H1 (cell line): ENCODE measurements at regions of chr20 and their contacts with region 1.

Region 1: GRCh38 chr20:13819885-13820645 is 35.2 kb downstream of the NDUFAF5 start:
- DNase-seq: no peak
- H3K4me3 ChIP-seq: no peak overlapping the region
- H3K27ac ChIP-seq: no peak overlapping the region
- H3K4me1 ChIP-seq: 0 out of 7 replicates have a peak, but pooled peaks cover 0 to 2% (median 0%) of the 10 kb centered on the region in 4 experiments
- H3K27me3 ChIP-seq: no peaks in the 10 kb centered on the region
- CTCF ChIP-seq: peak in 2 of 3 experiments; percentile 52 to 53; a peak in 2 of 4 replicates
- EP300 ChIP-seq: no peak
- POLR2A ChIP-seq: no peak
- RAD21 ChIP-seq: peak; percentile 61

Region 2: GRCh38 chr20:13809373-13809772 is 10.7 kb before region 1 on chr20:
- CTCF ChIA-PET with region 1: interaction called, 12 read pairs
- POLR2A ChIA-PET with region 1: no interaction called
- DNase-seq: no peak
- H3K4me3 ChIP-seq: no peak overlapping the region
- H3K27ac ChIP-seq: no peak overlapping the region
- H3K4me1 ChIP-seq: no peaks in the 10 kb centered on the region
- H3K27me3 ChIP-seq: no peaks in the 10 kb centered on the region
- CTCF ChIP-seq: no peak
- EP300 ChIP-seq: no peak
- POLR2A ChIP-seq: no peak
- RAD21 ChIP-seq: no peak

Region 3: DNA sequence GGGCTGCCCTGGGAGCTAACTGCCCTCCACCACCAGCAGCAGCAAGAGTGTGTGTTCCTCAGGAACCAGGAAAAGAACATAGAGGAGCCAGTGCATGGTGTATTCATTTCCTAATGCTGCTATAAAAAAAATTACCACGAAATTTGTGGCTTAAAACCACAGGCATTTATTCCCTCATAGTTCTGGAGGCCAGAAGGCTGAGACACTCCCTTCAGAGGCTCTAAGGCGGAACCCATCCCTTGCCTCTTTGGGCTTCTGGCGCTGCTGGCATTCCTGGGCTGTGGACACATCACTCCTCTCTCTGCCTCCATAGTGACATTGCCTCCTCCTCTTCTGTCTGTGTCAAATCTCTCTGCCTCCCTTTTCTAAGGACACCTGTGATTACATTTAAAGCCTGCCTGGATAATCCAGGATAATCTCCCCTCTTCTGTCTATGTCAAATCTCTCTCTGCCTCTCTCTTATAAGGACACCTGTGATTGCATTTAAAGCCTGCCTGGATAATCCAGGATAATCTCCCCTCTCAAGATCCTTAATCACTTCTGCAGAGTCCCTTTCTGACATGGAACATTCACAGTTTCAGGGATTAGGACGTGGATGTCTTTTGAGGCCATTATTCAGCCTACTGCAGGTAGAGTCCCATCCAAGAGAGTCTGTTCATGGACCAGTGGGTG is 19.5 kb after region 1 on chr20:
- CTCF ChIA-PET with region 1: interaction called, 12 read pairs
- POLR2A ChIA-PET with region 1: no interaction called
- DNase-seq: no peak
- H3K4me3 ChIP-seq: no peak overlapping the region
- H3K27ac ChIP-seq: no peak overlapping the region
- H3K4me1 ChIP-seq: no peaks in the 10 kb centered on the region
- H3K27me3 ChIP-seq: no peaks in the 10 kb centered on the region
- CTCF ChIP-seq: no peak
- EP300 ChIP-seq: no peak
- POLR2A ChIP-seq: no peak
- RAD21 ChIP-seq: no peak

Region 4: DNA sequence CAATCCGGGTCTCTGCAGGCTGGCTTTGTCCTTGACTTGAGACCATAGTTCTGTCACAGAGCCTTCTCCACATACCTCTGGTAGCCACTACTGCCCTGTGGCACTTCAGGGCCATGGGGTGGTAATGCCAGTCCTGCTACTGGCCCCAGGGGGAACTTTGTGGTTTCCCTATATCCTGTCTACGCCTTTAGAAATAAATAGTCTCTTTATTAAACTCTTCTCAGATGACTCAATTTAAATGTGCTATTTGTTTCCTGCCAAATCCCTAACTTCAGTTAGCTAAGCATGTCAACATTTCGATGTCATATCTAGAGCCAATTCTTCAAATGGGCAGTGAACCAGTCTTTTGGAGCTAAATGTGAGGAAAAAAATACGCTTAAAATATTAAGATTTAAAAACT is 110.2 kb after region 1 on chr20:
- CTCF ChIA-PET with region 1: no interaction called
- POLR2A ChIA-PET with region 1: no interaction called
- DNase-seq: no peak
- H3K4me3 ChIP-seq: no peak overlapping the region
- H3K27ac ChIP-seq: no peak overlapping the region
- H3K4me1 ChIP-seq: no peaks in the 10 kb centered on the region
- H3K27me3 ChIP-seq: no peaks in the 10 kb centered on the region
- CTCF ChIP-seq: no peak
- EP300 ChIP-seq: no peak
- POLR2A ChIP-seq: no peak
- RAD21 ChIP-seq: no peak

Region 5: GRCh38 chr20:13953227-13953626 is 133.2 kb after region 1 on chr20:
- CTCF ChIA-PET with region 1: interaction called, 10 read pairs
- POLR2A ChIA-PET with region 1: no interaction called
- DNase-seq: peak in 1 of 2 experiments; percentile 71
- H3K4me3 ChIP-seq: no peak overlapping the region
- H3K27ac ChIP-seq: no peak overlapping the region
- H3K4me1 ChIP-seq: no peaks in the 10 kb centered on the region
- H3K27me3 ChIP-seq: no peaks in the 10 kb centered on the region
- CTCF ChIP-seq: peak; percentile 59 to 77 (median 69)
- EP300 ChIP-seq: no peak
- POLR2A ChIP-seq: no peak
- RAD21 ChIP-seq: peak; percentile 37 to 59